MCF 10A (cell line): ENCODE measurements at regions of chr20 and their contacts with region 1.

Region 1: DNA sequence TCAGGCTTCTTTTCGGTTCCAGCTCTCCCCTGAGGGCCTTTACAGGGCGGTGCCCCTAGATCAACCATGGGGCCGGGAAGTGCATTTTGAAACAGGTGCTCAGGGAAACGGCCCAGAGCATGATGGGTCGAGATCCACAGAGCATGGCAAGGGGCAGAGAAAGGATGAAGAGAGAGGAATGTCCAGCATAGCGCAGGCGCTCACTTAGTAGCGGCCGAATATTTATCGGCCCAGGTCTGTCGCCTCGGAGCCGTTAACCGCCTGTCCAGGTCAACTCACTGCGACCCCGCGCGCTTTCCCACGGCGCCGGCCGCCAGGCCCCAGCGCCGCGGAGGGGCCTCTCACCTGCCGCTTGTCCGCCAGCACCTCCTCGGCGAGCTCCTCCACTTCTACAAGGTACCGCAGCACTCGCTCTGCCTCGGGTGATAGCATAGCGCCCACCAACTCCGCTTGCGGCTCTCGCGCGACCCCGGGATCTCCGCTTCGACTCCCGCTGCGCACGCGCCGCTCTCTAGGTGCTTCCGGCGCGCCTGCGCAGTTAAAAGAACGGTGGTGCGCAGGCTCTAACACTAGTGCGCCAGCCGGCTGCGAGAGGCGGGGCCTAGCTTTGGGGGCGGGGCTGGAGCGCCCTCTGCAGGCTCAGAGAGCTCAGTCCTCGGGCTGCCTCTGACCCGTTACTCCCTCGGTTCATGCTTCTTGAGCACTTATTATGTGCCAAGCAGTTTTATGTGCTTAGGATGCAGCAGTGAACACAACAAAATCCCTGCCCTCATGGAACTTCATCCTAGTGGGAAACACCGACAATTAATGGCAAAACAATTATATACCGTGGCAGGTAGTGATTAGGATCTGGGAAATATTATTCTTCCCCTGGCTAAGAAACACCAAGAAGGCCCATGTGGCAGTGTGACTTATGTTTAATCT is at the start of gene PDRG1:
- DNase-seq: peak; percentile 97
- H3K4me3 Mint-ChIP-seq: peak within 1 kb of the TSS; percentile 81
- H3K27ac Mint-ChIP-seq: peak within 1 kb of the TSS; percentile 91
- H3K4me1 Mint-ChIP-seq: peaks cover 13% of the 10 kb centered on the region
- H3K27me3 Mint-ChIP-seq: peaks cover 29% of the 10 kb centered on the region
- CTCF ChIP-seq: peak; percentile 71
- total RNA-seq, gene PDRG1: 12.2 and 16.3 TPM in 2 replicates

Region 2: GRCh38 chr20:31440012-31441002 is 511.5 kb before region 1 on chr20 and contains the start of gene DEFB123:
- CTCF ChIA-PET with region 1: no interaction called
- POLR2A ChIA-PET with region 1: no interaction called
- intact Hi-C with region 1: no loop called
- DNase-seq: no peak
- H3K4me3 Mint-ChIP-seq: no peak within 1 kb of the TSS
- H3K27ac Mint-ChIP-seq: no peak within 1 kb of the TSS
- H3K4me1 Mint-ChIP-seq: no peaks in the 10 kb centered on the region
- H3K27me3 Mint-ChIP-seq: peaks cover 35% of the 10 kb centered on the region
- CTCF ChIP-seq: peak; percentile 22
- total RNA-seq, gene DEFB123: not detected in 2 replicates

Region 3: DNA sequence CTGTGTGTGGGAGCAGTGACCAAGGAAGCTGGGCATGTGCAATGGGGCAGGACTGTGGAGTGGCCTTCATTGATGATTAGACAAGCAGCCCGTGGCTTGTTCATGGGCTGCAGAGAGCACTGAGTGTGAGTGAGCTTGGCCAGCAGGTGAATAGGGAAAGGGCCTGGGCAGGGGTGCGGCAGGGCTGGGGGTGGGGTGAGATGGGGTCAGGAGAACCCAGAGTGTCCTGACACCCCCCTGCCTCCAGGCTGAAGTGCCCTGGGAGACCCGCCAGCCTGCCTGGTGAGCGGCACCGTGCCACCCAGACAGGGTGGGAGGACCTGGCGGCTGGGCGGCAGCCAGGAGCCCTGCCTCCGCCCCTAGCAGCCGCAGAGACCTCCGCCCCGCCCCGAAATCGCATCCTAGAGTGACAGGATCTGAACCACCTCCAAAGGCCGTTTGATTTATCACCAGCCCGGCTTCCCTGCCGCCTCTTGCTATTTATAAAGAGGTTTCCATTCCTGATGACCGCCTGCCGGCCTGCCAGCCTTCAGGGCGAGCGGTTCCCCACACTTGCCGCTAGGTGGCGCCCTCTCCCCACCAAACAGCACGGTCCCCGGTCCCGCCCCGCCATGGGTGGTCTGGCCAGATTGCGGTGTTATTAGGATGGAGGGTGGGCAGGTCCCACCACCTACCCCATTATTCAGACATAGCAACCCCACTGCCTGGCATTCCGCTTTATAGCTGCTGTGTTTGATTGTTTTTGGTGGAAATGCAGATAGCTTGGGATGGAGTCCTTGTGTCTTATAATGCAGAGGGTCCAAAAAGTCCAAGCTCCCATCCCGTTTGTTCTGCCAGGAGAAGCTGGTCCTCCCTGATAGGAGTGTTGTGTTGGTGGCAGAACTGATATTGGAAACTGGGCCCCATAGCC is 129.1 kb before region 1 on chr20:
- CTCF ChIA-PET with region 1: interaction called, 26 read pairs
- POLR2A ChIA-PET with region 1: no interaction called
- intact Hi-C with region 1: loop called (anchors 1 kb)
- DNase-seq: peak; percentile 70
- H3K4me3 Mint-ChIP-seq: no peak overlapping the region
- H3K27ac Mint-ChIP-seq: no peak overlapping the region
- H3K4me1 Mint-ChIP-seq: no peaks in the 10 kb centered on the region
- H3K27me3 Mint-ChIP-seq: no peaks in the 10 kb centered on the region
- CTCF ChIP-seq: peak; percentile 99

Region 4: GRCh38 chr20:31869942-31870725 is 81.7 kb before region 1 on chr20 and contains the starts of genes DUSP15 and TTLL9:
- CTCF ChIA-PET with region 1: interaction called, 14 read pairs
- POLR2A ChIA-PET with region 1: interaction called, 5 read pairs
- intact Hi-C with region 1: no loop called
- DNase-seq: no peak
- H3K4me3 Mint-ChIP-seq: peak within 1 kb of the TSS; percentile 77
- H3K27ac Mint-ChIP-seq: peak within 1 kb of the TSS; percentile 81
- H3K4me1 Mint-ChIP-seq: peaks cover 7% of the 10 kb centered on the region
- H3K27me3 Mint-ChIP-seq: peaks cover 67% of the 10 kb centered on the region
- CTCF ChIP-seq: no peak
- total RNA-seq, gene DUSP15: not detected in 2 replicates
- total RNA-seq, gene TTLL9: 0.19 TPM in 1 of 2 replicates, not detected in the other

Region 5: GRCh38 chr20:31913431-31914157 is 38.2 kb before region 1 on chr20:
- CTCF ChIA-PET with region 1: interaction called, 10 read pairs
- POLR2A ChIA-PET with region 1: interaction called, 3 read pairs
- intact Hi-C with region 1: no loop called
- DNase-seq: no peak
- H3K4me3 Mint-ChIP-seq: no peak overlapping the region
- H3K27ac Mint-ChIP-seq: no peak overlapping the region
- H3K4me1 Mint-ChIP-seq: no peaks in the 10 kb centered on the region
- H3K27me3 Mint-ChIP-seq: peaks cover 22% of the 10 kb centered on the region
- CTCF ChIP-seq: no peak

Region 6: DNA sequence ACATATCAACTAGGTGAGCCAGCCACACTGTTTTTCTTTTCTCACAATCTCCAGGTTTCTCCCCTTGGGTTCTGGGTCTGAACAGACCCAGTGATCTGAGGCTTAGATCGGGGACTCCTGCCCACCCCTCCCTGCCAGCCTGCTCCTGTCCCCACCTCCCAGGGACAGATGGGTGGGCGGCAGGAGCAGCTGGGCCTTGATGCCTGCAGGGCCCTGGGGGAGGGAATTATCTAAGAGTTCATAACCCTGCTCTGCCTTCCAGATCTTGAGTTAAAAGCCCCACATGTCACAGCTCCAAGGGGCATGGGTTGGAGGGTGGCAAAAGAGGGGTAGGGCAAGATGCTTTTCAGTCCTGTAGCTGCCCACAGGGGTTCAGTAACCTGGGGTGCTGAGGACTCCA is 11.0 kb after region 1 on chr20:
- CTCF ChIA-PET with region 1: interaction called, 44 read pairs
- POLR2A ChIA-PET with region 1: interaction called, 4 read pairs
- intact Hi-C with region 1: no loop called
- DNase-seq: no peak
- H3K4me3 Mint-ChIP-seq: no peak overlapping the region
- H3K27ac Mint-ChIP-seq: no peak overlapping the region
- H3K4me1 Mint-ChIP-seq: no peaks in the 10 kb centered on the region
- H3K27me3 Mint-ChIP-seq: peaks cover 95% of the 10 kb centered on the region
- CTCF ChIP-seq: no peak

Region 7: DNA sequence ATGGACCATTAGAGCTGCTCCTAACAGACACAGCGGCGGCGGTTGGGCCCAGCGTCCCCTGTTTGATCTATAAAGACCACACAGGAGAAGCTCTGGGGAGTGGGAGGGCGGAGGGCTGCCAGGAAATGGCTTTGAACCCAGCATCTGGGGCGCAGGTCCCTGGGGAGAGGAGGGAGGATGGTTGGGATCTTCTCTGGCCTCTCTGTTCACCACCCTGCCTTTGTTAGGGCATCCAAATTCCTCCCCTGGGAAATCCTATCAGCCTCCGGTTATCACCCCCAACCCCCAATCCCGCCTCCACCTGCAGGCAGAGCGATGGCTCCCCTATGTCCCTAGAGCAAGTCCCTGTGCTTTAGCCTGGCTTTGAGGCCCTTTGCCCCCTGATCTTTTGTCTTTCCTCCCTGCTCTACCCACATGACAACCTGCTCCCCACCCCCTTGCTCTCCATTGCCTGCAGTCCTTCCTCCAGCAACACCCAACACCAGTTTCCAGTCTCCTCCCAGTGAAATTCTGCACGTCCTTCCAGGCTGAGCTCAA is 23.2 kb after region 1 on chr20:
- CTCF ChIA-PET with region 1: interaction called, 29 read pairs
- POLR2A ChIA-PET with region 1: interaction called, 4 read pairs
- intact Hi-C with region 1: no loop called
- DNase-seq: no peak
- H3K4me3 Mint-ChIP-seq: no peak overlapping the region
- H3K27ac Mint-ChIP-seq: no peak overlapping the region
- H3K4me1 Mint-ChIP-seq: no peaks in the 10 kb centered on the region
- H3K27me3 Mint-ChIP-seq: peaks cover 73% of the 10 kb centered on the region
- CTCF ChIP-seq: no peak